ENCODE measurements at regions of chr19 and their contacts with region 1.

Region 1: GRCh38 chr19:17390665-17391370 is 3.2 kb downstream of the CCDC194 start:
- DNase-seq: peak; percentile 90
- ATAC-seq: peak; percentile 99
- H3K4me3 Mint-ChIP-seq: peak overlapping the region; percentile 77
- H3K27ac Mint-ChIP-seq: no peak overlapping the region
- H3K4me1 Mint-ChIP-seq: peaks cover 27% of the 10 kb centered on the region
- H3K27me3 Mint-ChIP-seq: peaks cover 33% of the 10 kb centered on the region

Region 2: DNA sequence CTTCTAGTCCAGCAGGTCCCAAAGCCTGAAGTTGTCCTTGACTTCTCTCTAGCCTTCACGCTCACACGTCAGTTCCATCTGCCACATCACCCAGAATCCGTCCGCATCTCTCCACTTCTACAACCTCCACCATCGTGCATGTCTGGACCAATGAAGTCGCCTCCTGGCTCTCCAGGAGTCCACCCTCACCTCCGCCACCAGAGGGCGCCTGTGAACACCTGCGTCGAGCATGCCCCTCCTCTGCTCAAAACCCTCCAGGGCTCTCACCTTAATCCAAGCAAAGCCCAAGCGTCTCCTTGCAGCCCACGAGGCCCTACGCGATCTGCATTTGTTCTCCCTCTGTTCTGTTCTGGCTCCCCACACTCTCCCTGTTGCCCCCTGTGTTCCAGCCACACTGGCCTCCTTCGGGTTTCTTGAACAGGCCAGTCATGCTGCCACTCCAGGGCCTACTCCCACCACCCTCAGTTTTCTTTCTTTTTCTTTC is 129.9 kb before region 1 on chr19:
- CTCF ChIA-PET with region 1: interaction called, 19 read pairs
- DNase-seq: peak; percentile 94
- ATAC-seq: peak; percentile 100
- H3K4me3 Mint-ChIP-seq: no peak overlapping the region
- H3K27ac Mint-ChIP-seq: no peak overlapping the region
- H3K4me1 Mint-ChIP-seq: peaks cover 13% of the 10 kb centered on the region
- H3K27me3 Mint-ChIP-seq: no peaks in the 10 kb centered on the region

Region 3: GRCh38 chr19:17305517-17306284 is 85.1 kb before region 1 on chr19 and contains the start of gene MRPL34:
- CTCF ChIA-PET with region 1: interaction called, 10 read pairs
- DNase-seq: peak; percentile 99
- ATAC-seq: peak; percentile 68
- H3K4me3 Mint-ChIP-seq: peak within 1 kb of the TSS; percentile 87
- H3K27ac Mint-ChIP-seq: peak within 1 kb of the TSS; percentile 89
- H3K4me1 Mint-ChIP-seq: peaks cover 54% of the 10 kb centered on the region
- H3K27me3 Mint-ChIP-seq: no peaks in the 10 kb centered on the region
- total RNA-seq, gene MRPL34: 94.7 to 115 TPM

Region 4: DNA sequence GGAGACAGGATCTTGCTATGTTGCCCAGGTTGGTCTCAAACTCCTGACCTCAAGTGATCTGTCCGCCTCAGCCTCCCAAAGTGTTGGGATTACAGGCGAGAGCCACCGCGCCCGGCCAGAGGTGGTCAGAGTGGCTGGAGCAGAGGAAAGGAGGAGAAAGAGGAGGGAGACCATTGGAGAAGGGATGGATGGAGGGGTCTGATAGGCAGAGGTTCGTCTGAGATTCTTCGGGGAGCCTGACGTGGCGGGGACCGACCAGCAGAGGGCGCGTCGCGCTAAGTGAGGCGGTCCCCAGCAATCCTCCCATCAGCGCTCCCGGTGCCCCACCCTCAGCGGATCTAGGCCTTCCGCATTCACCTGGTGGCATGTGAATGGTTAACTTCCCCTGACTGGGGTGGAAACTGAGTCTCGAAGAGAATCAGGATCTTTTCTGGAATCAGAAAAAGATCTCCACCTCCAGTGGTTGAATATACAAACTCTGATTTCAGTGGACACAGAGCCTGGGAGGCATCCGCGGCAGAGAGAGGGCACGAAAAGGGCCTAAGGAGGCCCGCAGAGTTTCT is 44.6 kb before region 1 on chr19:
- CTCF ChIA-PET with region 1: interaction called, 11 read pairs
- DNase-seq: peak; percentile 84
- ATAC-seq: peak; percentile 96
- H3K4me3 Mint-ChIP-seq: no peak overlapping the region
- H3K27ac Mint-ChIP-seq: peak overlapping the region; percentile 15
- H3K4me1 Mint-ChIP-seq: peaks cover 21% of the 10 kb centered on the region
- H3K27me3 Mint-ChIP-seq: peaks cover 25% of the 10 kb centered on the region

Region 5: DNA sequence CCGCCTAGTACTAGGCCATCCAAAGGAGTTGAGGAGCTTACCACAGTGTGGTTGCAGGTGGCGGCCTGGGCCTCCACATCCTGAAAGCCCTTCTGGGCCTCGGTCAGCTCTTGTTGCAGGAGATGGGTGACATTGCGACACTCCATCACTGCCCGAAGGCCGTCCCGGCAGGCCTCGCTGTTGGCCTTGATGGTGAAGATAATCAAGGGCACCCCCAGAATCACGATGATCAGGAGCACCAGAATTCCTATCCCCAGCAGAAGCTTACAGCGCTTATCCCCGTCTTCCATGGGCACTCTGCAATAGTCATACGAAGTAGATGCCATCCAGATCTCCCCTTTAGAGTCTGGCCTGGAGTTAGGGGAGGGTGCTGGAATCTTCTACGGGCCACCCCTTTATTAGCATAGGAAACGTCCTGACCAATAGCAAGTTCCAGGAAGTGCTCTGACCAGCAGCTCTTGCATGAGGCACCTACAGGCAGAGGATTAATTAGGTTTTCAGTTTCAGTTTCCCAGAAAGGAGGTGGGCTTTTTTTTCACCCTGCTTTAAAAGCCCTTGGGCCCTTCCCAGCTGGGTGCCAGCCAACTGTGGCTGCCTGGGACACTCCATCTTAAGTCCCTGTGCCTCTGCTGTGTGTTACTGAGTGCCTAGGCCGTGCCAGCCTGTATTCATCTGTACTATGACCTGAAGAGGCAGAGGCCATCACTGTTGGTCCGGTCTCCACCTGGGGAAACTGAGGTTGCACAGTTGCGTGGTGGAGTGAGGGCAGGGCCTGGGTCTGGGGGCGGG is 14.6 kb after region 1 on chr19 and contains the start of gene BST2:
- CTCF ChIA-PET with region 1: interaction called, 20 read pairs
- DNase-seq: peak; percentile 85
- ATAC-seq: peak; percentile 88
- H3K4me3 Mint-ChIP-seq: peak within 1 kb of the TSS; percentile 94
- H3K27ac Mint-ChIP-seq: peak within 1 kb of the TSS; percentile 97
- H3K4me1 Mint-ChIP-seq: peaks cover 32% of the 10 kb centered on the region
- H3K27me3 Mint-ChIP-seq: no peaks in the 10 kb centered on the region
- total RNA-seq, gene BST2: 298 to 361 TPM

Measured in activated CD8-positive, alpha-beta memory T cell treated with anti-CD3 and anti-CD28 coated beads, Interleukin-2, amount 10 ng/mL, durations not matched to agents 7 days and 5 days (primary cell).